Psoas muscle (tissue), 8 donors: ENCODE measurements at regions of chr10 and their contacts with region 1.

Region 1: DNA sequence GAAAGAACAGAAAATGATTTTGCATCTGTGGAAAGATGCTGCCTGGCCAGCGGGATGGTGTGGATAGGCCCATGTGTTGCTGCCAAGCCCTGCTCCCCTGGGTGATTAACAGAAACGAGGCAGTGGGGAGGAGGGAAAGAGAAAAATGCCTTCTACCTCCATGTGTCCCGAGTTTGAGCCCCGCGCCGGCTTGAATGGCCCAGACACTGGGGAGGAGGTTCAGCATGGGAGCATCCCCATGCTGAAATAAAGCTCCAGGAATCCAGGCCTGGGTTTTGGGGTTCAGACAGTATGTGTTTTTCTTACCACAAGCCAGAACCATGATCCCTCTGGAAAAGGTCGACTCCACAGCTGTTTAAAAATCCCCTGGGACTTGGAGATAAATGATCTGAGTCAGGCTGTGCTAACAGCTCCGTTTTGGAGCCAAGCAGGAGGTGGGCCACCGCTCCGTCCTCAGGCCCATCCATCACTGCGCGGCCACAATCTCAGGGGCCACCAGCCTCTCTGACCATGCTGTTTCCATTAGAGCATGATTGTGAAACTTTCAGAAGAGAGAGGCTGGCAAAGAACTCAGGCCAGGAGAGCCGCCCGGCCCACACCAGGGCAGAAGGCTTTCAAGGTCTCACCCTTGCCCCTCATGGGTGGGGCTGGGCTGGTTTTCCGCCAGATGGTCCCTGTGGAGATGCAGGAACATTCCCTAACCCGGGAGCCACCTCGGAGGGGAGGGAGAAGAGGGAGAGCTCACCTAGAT is 299.7 kb downstream of the ZEB1 start:
- DNase-seq: peak; percentile 72 to 86
- ATAC-seq: peak; percentile 31 to 65 (median 42)
- H3K4me3 ChIP-seq: no peak overlapping the region
- H3K27ac ChIP-seq: peak overlapping the region; percentile 50
- H3K4me1 ChIP-seq: peaks cover 20% of the 10 kb centered on the region
- H3K27me3 ChIP-seq: no peaks in the 10 kb centered on the region
- CTCF ChIP-seq: no peak

Region 2: DNA sequence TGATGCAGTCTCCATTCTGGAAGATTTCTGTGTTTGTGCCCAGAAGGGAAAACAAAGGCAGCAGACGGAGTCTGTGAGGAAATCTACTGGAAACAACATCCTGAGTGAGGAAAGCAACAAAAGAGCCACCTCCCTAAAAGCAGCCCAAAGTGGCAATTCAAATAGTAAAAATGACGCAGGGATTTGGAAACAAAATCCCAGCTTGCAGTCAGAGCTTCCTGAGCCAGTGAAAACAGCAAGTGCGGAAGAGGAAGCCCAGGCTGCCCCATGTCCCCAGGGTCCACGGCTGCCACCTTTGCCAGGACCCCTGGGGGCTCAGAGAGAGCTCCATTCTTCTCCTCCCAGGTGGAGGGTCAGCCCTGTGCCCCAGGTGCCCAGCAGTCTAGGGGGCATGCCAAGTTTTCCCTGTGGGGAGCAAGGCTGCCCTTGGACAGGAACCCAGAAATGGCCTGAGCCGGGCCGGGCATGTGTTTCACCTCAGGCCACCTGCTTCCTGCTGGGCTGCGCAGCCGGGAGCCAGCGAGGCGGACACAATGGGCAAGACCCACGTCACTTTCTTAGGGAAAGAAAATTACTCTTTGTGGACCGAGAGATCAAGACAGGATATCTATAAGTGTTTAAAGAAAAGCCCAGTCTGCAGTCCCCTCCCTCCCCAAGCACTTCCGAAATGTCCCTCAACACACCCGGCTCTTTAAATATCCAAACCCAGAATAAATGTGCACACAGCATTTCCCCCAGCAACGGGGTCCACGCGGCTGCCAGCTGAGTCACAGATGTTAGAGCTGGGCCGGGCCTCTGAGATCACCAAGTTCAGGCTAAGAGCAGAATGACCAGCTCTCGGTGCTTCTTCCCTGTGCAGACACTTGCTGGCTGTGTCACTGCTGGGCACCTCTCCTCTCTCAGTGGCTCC is 78.8 kb after region 1 on chr10:
- intact Hi-C with region 1: loop called in 1 of 2 experiments (anchors 5 kb)
- DNase-seq: peak; percentile 90 to 92
- ATAC-seq: peak; percentile 77 to 89 (median 85)
- H3K4me3 ChIP-seq: peak overlapping the region; percentile 44
- H3K27ac ChIP-seq: peak overlapping the region; percentile 86
- H3K4me1 ChIP-seq: peaks cover 40% of the 10 kb centered on the region
- H3K27me3 ChIP-seq: no peaks in the 10 kb centered on the region
- CTCF ChIP-seq: no peak

Region 3: GRCh38 chr10:31847515-31847914 is 228.8 kb after region 1 on chr10:
- intact Hi-C with region 1: no loop called
- DNase-seq: no peak
- ATAC-seq: no peak
- H3K4me3 ChIP-seq: no peak overlapping the region
- H3K27ac ChIP-seq: no peak overlapping the region
- H3K4me1 ChIP-seq: no peaks in the 10 kb centered on the region
- H3K27me3 ChIP-seq: no peaks in the 10 kb centered on the region
- CTCF ChIP-seq: no peak